ENCODE measurements at regions of chr6 and their contacts with region 1.

Region 1: DNA sequence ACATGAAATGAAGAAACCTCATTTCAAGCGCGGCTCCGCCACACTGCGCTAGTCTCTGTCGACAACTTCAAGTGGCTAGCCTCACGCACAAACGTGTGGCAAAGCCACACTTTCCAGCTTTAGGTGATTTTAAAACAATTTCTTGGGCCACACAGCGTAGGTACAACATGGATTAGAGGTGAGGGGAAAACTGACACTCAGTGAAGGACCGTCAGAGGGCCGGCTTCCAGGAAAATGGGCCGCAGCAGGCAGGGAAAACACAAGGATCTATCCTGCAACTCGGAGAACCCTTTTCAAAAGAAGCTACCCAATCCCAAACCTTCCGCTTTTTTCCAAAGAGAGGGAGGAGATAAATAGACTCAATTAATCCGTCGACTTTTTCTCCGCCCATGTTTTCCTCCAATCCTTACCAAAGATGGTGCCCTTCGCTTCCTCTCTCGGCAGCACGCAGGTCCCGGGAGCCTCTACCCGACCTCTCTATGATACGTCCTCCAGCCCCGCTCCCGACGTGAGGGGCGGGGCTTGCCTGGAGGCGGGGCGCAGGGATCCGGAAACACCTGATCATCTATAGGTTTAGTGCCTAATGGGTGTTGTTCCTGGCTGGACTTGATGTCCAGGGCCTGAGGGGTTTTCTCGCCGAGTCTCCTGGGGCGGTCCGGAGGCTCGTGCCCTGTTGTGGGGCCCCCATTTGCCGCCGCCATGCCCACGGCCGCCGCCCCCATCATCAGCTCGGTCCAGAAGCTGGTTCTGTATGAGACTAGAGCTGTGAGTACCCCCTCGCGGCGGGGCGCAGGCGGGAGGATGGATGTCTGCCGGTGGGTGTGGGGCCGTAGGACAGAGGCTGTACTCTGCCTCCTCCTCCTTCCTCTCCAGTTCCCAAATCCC is at the starts of genes AK9 and FIG4:
- DNase-seq: peak; percentile 92 to 95 (median 94)
- ATAC-seq: peak; percentile 99
- H3K4me3 ChIP-seq: peak within 1 kb of the TSS; percentile 57 to 97 (median 80)
- H3K27ac ChIP-seq: peak within 1 kb of the TSS; percentile 64 to 95 (median 82)
- H3K4me1 ChIP-seq: peaks cover 0 to 34% (median 15%) of the 10 kb centered on the region in 12 donors
- H3K27me3 ChIP-seq: no peaks in the 10 kb centered on the region
- CTCF ChIP-seq: peak in 6 of 12 donors; percentile 12 to 42 (median 21)
- POLR2A ChIP-seq: peak in 1 of 2 donors; percentile 64
- total RNA-seq, gene AK9: 7.7 to 17.0 (median 10.6) TPM
- total RNA-seq, gene FIG4: 6.9 to 17.2 (median 10.4) TPM

Region 2: DNA sequence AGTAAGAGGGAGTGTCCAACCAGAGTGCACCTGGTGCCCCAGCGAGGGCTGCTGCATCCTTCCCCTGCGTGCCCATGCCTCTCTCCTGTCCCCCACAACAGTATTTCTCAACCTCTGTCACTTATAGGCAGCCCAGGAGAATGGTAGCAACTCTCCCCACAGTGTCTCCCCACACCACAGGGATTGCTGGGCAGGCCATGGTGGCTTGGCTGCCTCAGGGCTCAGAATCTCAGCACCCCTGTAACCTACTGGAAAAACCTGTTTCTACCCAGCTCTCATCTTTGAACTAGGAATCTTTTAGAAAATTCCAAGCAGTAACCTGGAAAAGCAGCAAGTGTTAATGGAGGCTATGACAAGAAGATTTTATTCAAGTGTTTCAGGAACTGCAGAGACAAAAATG is 346.8 kb before region 1 on chr6:
- intact Hi-C with region 1: no loop called
- DNase-seq: no peak
- ATAC-seq: no peak
- H3K4me3 ChIP-seq: no peak overlapping the region
- H3K27ac ChIP-seq: no peak overlapping the region
- H3K4me1 ChIP-seq: peaks cover 0 to 24% (median 1%) of the 10 kb centered on the region in 12 donors
- H3K27me3 ChIP-seq: no peaks in the 10 kb centered on the region
- CTCF ChIP-seq: no peak
- POLR2A ChIP-seq: no peak

Region 3: GRCh38 chr6:109482905-109483735 is 207.9 kb before region 1 on chr6 and contains the start of gene ZBTB24:
- intact Hi-C with region 1: loop called in 1 of 10 experiments (anchors 5 kb)
- DNase-seq: peak; percentile 91 to 97 (median 94)
- ATAC-seq: peak; percentile 90 to 97 (median 97)
- H3K4me3 ChIP-seq: peak within 1 kb of the TSS; percentile 83 to 100 (median 98)
- H3K27ac ChIP-seq: peak within 1 kb of the TSS in 11 of 12 donors; percentile 59 to 87 (median 81)
- H3K4me1 ChIP-seq: peaks cover 0 to 48% (median 39%) of the 10 kb centered on the region in 12 donors
- H3K27me3 ChIP-seq: no peaks in the 10 kb centered on the region
- CTCF ChIP-seq: no peak
- POLR2A ChIP-seq: peak in 1 of 2 donors; percentile 90
- total RNA-seq, gene ZBTB24: 2.4 to 4.8 (median 3.1) TPM

Region 4: GRCh38 chr6:110179401-110180227 is 488.6 kb after region 1 on chr6 and contains the start of gene WASF1:
- intact Hi-C with region 1: loop called in 3 of 10 experiments (anchors 10 kb)
- DNase-seq: peak; percentile 90 to 96 (median 94)
- ATAC-seq: peak; percentile 99 to 100 (median 100)
- H3K4me3 ChIP-seq: peak within 1 kb of the TSS; percentile 66 to 97 (median 82)
- H3K27ac ChIP-seq: peak within 1 kb of the TSS; percentile 46 to 92 (median 78)
- H3K4me1 ChIP-seq: peaks cover 5 to 43% (median 33%) of the 10 kb centered on the region in 12 donors
- H3K27me3 ChIP-seq: no peaks in the 10 kb centered on the region
- CTCF ChIP-seq: no peak
- POLR2A ChIP-seq: peak in 1 of 2 donors; percentile 25
- total RNA-seq, gene WASF1: 0.54 to 4.2 (median 1.3) TPM